ENCODE measurements at regions of chr2 and their contacts with region 1.

Region 1: DNA sequence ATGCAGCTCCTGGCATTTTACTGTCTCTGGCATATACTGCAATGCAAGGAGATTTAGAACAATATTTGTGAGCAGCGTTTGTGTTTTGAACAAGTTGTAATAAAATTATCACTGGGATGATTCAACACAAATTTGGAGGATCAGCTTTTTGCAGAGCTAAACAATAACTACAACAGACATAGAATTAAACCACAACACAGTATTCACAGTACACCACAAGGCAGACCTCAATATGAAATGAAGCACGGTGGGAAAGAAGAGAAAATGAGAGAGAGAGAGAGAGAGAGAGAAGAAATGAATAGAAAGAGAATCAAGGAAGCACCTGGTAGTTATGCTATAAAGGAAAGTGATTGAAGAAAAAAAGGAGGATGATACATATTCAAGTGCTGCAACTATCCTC is 39.4 kb downstream of the HOXD1 start:
- DNase-seq: no peak
- H3K4me3 ChIP-seq: no peak overlapping the region
- H3K27ac ChIP-seq: no peak overlapping the region
- H3K4me1 ChIP-seq: no peaks in the 10 kb centered on the region
- H3K27me3 ChIP-seq: no peaks in the 10 kb centered on the region
- CTCF ChIP-seq: no peak
- POLR2A ChIP-seq: no peak

Region 2: GRCh38 chr2:176269319-176270099 is 41.6 kb after region 1 on chr2 and contains the start of gene MTX2:
- intact Hi-C with region 1: no loop called
- DNase-seq: peak; percentile 22 to 61
- H3K4me3 ChIP-seq: peak within 1 kb of the TSS; percentile 84 to 92 (median 85)
- H3K27ac ChIP-seq: peak within 1 kb of the TSS; percentile 89 to 91
- H3K4me1 ChIP-seq: peaks cover 0 to 9% of the 10 kb centered on the region in 2 donors
- H3K27me3 ChIP-seq: no peaks in the 10 kb centered on the region
- CTCF ChIP-seq: peak in 1 of 3 donors; percentile 24
- POLR2A ChIP-seq: no peak
- total RNA-seq, gene MTX2: 19.7 to 27.2 (median 23.6) TPM

Region 3: GRCh38 chr2:176291809-176292283 is 64.0 kb after region 1 on chr2:
- intact Hi-C with region 1: no loop called
- DNase-seq: no peak
- H3K4me3 ChIP-seq: no peak overlapping the region
- H3K27ac ChIP-seq: no peak overlapping the region
- H3K4me1 ChIP-seq: no peaks in the 10 kb centered on the region
- H3K27me3 ChIP-seq: no peaks in the 10 kb centered on the region
- CTCF ChIP-seq: no peak
- POLR2A ChIP-seq: no peak

Region 4: GRCh38 chr2:176685911-176686310 is 458.0 kb after region 1 on chr2:
- intact Hi-C with region 1: loop called (anchors 5 kb)
- DNase-seq: no peak
- H3K4me3 ChIP-seq: no peak overlapping the region
- H3K27ac ChIP-seq: no peak overlapping the region
- H3K4me1 ChIP-seq: no peaks in the 10 kb centered on the region
- H3K27me3 ChIP-seq: no peaks in the 10 kb centered on the region
- CTCF ChIP-seq: no peak
- POLR2A ChIP-seq: no peak

Measured in breast epithelium (tissue), 4 donors.